ENCODE measurements at regions of chr3 and their contacts with region 1.

Region 1: DNA sequence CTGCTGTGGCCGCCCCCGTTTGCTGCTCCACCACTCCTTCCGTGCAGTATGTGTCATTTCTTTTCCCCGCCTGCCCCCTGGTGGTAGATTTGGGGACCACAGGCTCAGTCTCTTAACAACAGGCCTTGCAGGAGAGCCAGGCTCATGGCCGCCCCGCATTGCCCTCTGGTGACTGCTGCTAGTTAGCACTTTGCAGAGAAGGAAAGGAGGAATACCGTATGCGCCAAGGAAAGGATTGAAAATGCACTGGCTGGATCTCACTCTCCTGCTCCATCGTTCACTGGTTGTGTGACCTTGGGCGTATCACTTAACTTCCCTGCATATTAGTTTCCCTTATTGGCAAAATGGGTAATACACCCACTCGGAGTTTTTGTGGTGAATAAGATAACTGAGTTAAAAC is 39.3 kb upstream of the PXYLP1 start:
- DNase-seq: peak; percentile 93
- H3K4me3 ChIP-seq: no peak overlapping the region
- H3K27ac ChIP-seq: no peak overlapping the region
- H3K4me1 ChIP-seq: no peaks in the 10 kb centered on the region
- H3K27me3 ChIP-seq: peaks cover 28% of the 10 kb centered on the region

Region 2: GRCh38 chr3:141011232-141011996 is 180.9 kb before region 1 on chr3:
- in situ Hi-C with region 1: loop called (anchors 10 kb)
- DNase-seq: peak; percentile 82
- H3K4me3 ChIP-seq: no peak overlapping the region
- H3K27ac ChIP-seq: no peak overlapping the region
- H3K4me1 ChIP-seq: no peaks in the 10 kb centered on the region
- H3K27me3 ChIP-seq: peaks cover 25% of the 10 kb centered on the region